Naive thymus-derived CD8-positive, alpha-beta T cell (primary cell): ENCODE measurements at regions of chr11 and their contacts with region 1.

Region 1: DNA sequence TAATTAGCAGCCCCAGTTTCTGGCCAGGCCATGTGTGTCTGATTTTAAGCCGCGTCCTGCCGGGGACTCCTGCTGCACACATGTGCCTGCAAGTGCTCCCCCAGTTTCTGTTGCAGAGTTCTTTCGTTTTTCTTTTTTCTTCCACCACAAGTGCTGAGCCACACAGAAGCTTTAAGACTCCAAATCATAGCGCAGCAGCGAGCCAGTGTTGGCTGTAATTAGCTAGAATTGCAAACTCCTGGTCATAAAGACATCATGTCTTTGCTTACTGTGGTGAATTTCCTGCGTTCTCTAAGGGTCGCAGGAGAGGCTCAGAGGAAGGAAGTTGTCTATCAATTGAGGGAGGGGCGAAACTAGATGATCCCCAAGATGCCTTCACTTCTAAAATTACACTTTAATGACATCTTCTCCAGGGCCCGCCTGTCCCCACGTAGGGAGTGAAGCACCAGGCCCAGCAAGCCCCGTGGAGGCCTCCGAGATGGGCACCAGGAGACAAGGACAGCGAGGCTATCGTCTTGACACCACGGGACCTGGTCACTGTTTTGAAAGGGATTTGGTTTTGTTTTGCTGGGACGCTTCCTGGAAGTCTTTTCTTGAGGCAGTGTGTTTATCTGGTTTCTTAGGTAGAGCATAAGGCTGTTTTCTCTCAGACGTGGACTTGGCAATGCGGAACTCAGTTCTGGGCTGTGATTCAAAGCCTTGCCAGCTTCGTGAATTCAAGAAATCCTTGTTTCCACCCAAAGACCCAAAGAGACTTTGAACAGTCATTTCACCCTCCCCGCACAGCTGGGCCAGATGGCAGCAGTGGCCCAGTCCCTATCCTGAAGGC is 71.8 kb downstream of the UBASH3B start:
- DNase-seq: peak in 6 of 10 donors; percentile 9 to 55 (median 32)
- ATAC-seq: peak; percentile 78 to 79
- H3K4me3 Mint-ChIP-seq: peak overlapping the region; percentile 76 to 97 (median 86)
- H3K27ac Mint-ChIP-seq: peak overlapping the region; percentile 93 to 99 (median 98)
- H3K4me1 Mint-ChIP-seq: peaks cover 45 to 86% (median 79%) of the 10 kb centered on the region in 4 donors
- H3K27me3 Mint-ChIP-seq: no peaks in the 10 kb centered on the region

Region 2: DNA sequence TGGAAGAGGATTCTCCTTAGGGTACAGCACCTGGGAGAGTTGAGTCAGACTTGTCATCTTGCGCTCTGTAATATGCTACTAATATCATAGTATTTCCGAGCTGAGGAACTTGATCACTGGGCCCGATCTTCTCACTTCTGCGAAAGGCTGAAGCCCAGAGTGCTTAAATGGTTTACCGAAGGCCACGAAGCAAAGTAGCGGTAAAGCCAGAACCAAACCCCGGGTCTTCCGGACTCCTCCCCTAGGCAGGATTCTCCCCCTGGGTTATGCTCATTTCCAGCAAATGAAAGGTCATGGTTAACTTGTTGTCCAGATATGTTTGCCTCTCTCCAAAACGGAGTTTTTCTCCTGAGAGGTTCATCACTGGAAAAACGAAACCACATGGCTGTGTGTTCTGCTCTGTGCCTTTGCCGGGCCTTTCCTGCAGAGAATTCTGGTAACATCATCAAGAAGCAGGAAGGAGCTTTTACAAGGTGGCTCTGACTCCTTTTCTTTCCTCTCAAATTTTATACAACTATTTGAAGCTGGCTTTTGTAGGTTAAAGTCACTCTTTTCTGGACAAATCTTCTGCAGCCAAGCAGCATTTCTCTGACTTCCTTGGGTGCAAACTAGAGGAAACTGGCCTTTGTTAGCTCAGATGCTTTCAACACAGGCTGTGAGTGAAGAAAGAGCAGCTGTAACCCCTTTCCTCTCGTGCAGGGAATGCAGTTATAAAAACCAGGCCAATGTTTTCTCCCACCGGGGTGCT is 36.3 kb before region 1 on chr11:
- POLR2A ChIA-PET with region 1: interaction called, 27 read pairs
- DNase-seq: peak in 3 of 10 donors; percentile 30 to 37 (median 31)
- ATAC-seq: peak; percentile 61 to 68
- H3K4me3 Mint-ChIP-seq: peak overlapping the region; percentile 37 to 83 (median 80)
- H3K27ac Mint-ChIP-seq: peak overlapping the region; percentile 87 to 96 (median 93)
- H3K4me1 Mint-ChIP-seq: peaks cover 47 to 86% (median 80%) of the 10 kb centered on the region in 4 donors
- H3K27me3 Mint-ChIP-seq: no peaks in the 10 kb centered on the region

Region 3: DNA sequence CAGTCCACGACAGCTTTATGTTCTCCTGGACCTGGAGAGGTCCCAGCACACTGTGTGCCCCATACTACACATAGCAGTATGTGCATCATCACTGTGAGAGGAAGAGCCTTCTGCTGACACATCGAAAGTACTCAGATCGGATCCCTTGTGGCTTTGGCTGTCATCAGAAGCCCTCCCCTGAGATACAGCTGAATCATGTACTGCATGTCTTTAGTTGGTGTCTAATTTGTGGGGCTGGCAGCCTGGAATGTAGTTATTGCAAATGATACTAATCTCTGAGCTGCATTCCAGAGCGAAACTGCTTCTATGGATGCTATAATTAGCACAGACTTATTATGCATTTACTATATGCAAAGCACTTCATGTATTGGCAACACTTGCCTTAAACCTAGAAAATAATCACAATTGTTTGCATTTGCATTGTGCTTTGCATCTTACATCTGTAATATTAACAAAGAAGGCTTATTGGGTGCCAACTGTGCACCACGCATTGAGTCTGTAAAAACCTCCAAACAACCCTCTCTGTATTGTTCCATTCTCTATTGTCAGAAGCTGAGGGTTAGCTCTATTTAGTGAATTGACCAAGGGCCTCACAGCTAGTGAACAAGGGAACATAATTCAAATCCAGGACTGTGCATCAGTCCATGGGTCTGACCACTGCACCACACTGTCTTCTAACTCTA is 21.8 kb after region 1 on chr11:
- POLR2A ChIA-PET with region 1: interaction called, 54 read pairs
- DNase-seq: peak in 4 of 10 donors; percentile 23 to 41 (median 34)
- ATAC-seq: peak in 1 of 2 donors; percentile 36
- H3K4me3 Mint-ChIP-seq: peak overlapping the region in 4 of 10 donors; percentile 5 to 59 (median 34)
- H3K27ac Mint-ChIP-seq: peak overlapping the region in 3 of 10 donors; percentile 21 to 70 (median 49)
- H3K4me1 Mint-ChIP-seq: peaks cover 19 to 51% (median 43%) of the 10 kb centered on the region in 4 donors
- H3K27me3 Mint-ChIP-seq: no peaks in the 10 kb centered on the region